Gastrocnemius medialis (tissue), 4 donors: ENCODE measurements at regions of chr4 and their contacts with region 1.

Region 1: DNA sequence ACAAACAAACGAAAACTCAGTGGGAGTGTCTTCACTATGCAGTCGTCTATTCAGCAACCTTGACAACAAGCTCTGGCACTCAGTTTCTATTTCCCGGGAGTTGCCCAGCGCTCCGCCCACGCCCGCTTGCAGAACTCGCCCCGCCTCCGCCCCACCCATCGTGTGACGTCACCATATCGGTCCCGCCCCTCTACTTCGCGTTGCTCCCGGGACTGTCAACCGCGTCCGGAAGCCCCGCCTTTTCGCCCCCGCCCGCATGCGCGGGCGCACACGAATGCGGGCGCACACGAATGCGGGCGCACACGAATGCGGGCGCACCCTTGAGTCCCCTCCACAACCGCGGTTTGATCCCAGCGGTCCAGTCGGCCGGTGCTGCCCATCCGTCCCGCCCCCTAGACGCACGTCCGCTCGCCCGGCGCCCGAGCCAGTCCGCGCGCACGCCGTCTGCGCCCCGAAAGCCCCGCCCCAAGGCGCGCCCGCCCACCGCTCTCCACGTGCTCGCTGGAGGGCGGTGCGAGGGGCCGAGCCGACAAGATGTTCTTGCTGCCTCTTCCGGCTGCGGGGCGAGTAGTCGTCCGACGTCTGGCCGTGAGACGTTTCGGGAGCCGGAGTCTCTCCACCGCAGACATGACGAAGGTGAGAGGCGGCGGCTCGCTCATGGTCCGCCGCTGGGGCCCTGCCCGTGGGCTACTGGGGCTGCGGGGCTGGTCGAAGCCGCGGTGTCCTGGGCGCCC is at the start of gene LAP3:
- DNase-seq: peak; percentile 94 to 97
- ATAC-seq: peak; percentile 90 to 93
- H3K4me3 ChIP-seq: peak within 1 kb of the TSS; percentile 81 to 93 (median 87)
- H3K27ac ChIP-seq: peak within 1 kb of the TSS; percentile 86 to 95 (median 90)
- H3K4me1 ChIP-seq: peaks cover 16 to 28% of the 10 kb centered on the region in 2 donors
- H3K27me3 ChIP-seq: no peaks in the 10 kb centered on the region
- CTCF ChIP-seq: no peak
- POLR2A ChIP-seq: peak; percentile 80 to 90
- total RNA-seq, gene LAP3: 63.7 to 85.2 (median 76.5) TPM

Region 2: DNA sequence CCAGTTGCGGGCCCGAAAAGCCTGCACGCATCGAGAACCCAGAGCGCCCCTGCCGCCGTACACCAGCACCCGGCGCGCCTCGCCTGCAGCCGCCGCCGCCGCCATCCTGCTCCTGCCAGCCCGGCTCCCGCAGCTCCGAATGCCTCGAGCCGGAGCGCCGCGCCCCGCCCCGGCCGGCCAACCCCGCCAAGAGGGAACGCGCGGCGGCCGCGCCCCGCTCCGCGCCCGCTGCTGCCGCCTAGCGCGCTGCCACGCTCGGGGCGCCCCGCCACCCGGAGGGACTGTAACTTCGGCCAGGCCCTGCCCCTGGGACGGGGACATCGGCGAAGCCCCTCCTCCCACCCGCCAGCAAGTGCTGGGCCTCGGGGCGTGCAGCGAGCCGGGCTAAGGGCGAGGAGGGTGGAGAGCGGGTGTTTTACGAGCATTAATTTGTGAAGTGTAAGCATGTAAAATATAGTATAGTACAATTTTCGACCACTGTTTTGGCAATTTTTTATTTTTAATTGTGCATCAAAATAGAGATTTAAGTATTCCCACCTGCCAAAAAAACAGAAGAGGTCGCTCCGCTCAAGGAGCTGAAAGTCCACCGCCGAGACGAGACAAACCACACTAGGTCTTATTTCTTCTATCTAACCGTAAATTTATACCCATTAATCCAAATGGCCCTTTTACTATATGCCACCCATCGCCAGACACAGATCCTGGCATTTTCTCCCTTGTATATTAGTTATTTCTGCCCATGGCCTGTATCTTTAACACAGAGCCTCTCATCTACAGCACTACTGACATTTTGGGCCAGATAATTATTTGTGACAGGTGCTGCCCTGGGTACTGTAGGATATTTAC is 64.9 kb before region 1 on chr4 and contains the start of gene QDPR:
- in situ Hi-C with region 1: no loop called
- intact Hi-C with region 1: loop called (anchors 2 kb)
- DNase-seq: peak; percentile 37 to 75
- ATAC-seq: peak; percentile 80 to 84
- H3K4me3 ChIP-seq: peak within 1 kb of the TSS; percentile 69 to 96 (median 74)
- H3K27ac ChIP-seq: peak within 1 kb of the TSS; percentile 74 to 85 (median 78)
- H3K4me1 ChIP-seq: peaks cover 8 to 23% of the 10 kb centered on the region in 2 donors
- H3K27me3 ChIP-seq: no peaks in the 10 kb centered on the region
- CTCF ChIP-seq: peak in 4 of 5 experiments; percentile 15 to 50 (median 36)
- POLR2A ChIP-seq: peak in 1 of 2 donors; percentile 6
- total RNA-seq, gene QDPR: 6.9 to 15.6 (median 9.1) TPM

Region 3: DNA sequence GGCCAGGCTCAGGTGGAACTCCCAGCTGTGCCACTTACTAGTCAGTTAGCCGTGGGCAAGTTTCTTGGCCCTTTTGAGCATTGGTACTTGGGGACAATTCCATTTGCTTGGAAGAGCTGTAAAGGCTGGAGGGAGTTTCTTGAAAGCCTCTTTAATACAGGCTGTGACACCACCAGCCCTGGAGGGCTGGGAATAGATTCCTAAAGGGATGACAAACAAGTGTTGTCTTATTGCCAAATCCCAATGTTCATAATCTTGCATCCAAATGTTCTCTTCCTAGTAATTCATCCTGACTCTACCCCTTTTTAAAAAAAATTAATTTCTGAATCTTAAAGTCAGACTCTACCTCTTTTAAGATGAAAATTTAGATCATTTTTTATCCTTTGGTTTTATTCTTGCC is 22.7 kb after region 1 on chr4:
- in situ Hi-C with region 1: no loop called
- intact Hi-C with region 1: no loop called
- DNase-seq: no peak
- ATAC-seq: no peak
- H3K4me3 ChIP-seq: no peak overlapping the region
- H3K27ac ChIP-seq: peak overlapping the region in 1 of 4 donors; percentile 7
- H3K4me1 ChIP-seq: peaks cover 0 to 6% of the 10 kb centered on the region in 2 donors
- H3K27me3 ChIP-seq: no peaks in the 10 kb centered on the region
- CTCF ChIP-seq: no peak
- POLR2A ChIP-seq: no peak

Region 4: DNA sequence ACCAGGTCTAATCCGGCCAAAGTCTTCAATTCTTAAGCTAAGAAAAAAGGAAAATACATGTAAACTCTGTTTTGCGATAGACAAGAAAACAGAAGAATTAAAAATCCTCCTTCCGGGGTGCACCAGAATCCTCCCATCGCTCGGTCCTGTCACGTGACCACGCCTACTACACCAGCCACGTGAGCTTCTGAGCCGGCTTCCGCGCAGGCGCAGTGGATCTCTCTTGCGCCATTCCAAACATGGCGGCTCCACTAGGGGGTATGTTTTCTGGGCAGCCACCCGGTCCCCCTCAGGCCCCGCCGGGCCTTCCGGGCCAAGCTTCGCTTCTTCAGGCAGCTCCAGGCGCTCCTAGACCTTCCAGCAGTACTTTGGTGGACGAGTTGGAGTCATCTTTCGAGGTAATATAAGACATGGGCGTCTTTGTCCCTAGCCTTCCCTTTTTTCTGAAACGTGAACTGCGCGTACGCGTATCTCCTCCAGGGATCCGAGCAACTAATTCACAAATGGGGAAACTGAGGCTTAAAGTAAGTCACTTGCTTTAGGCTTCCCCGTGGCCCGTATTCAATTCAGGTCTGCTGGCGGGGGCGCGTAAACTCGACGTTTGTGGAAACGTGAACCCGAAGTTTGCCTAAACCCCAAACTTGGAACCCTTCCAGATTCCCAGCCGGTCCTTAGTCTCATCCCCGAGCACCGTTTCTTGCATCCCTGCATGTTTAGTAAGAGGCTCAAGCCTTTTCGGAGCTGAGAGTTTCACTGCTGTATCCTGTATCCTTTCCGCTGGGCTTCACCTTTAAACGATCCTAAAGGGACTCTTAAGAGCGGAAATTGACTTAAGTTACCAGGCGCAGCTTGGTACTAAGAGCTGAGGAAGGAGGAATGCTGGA is 37.6 kb after region 1 on chr4 and contains the start of gene MED28:
- in situ Hi-C with region 1: no loop called
- intact Hi-C with region 1: loop called (anchors 1 kb)
- DNase-seq: peak; percentile 94 to 95
- ATAC-seq: peak; percentile 88 to 90
- H3K4me3 ChIP-seq: peak within 1 kb of the TSS; percentile 70 to 98 (median 92)
- H3K27ac ChIP-seq: peak within 1 kb of the TSS; percentile 91 to 98 (median 97)
- H3K4me1 ChIP-seq: peaks cover 45% of the 10 kb centered on the region in 2 donors
- H3K27me3 ChIP-seq: no peaks in the 10 kb centered on the region
- CTCF ChIP-seq: peak in 3 of 5 experiments; percentile 23 to 51 (median 24)
- POLR2A ChIP-seq: peak; percentile 96 to 97
- total RNA-seq, gene MED28: 4.5 to 20.0 (median 17.5) TPM

Region 5: GRCh38 chr4:17726925-17727324 is 149.8 kb after region 1 on chr4:
- in situ Hi-C with region 1: no loop called
- intact Hi-C with region 1: no loop called
- DNase-seq: no peak
- ATAC-seq: no peak
- H3K4me3 ChIP-seq: no peak overlapping the region
- H3K27ac ChIP-seq: no peak overlapping the region
- H3K4me1 ChIP-seq: no peaks in the 10 kb centered on the region
- H3K27me3 ChIP-seq: no peaks in the 10 kb centered on the region
- CTCF ChIP-seq: no peak
- POLR2A ChIP-seq: no peak

Region 6: DNA sequence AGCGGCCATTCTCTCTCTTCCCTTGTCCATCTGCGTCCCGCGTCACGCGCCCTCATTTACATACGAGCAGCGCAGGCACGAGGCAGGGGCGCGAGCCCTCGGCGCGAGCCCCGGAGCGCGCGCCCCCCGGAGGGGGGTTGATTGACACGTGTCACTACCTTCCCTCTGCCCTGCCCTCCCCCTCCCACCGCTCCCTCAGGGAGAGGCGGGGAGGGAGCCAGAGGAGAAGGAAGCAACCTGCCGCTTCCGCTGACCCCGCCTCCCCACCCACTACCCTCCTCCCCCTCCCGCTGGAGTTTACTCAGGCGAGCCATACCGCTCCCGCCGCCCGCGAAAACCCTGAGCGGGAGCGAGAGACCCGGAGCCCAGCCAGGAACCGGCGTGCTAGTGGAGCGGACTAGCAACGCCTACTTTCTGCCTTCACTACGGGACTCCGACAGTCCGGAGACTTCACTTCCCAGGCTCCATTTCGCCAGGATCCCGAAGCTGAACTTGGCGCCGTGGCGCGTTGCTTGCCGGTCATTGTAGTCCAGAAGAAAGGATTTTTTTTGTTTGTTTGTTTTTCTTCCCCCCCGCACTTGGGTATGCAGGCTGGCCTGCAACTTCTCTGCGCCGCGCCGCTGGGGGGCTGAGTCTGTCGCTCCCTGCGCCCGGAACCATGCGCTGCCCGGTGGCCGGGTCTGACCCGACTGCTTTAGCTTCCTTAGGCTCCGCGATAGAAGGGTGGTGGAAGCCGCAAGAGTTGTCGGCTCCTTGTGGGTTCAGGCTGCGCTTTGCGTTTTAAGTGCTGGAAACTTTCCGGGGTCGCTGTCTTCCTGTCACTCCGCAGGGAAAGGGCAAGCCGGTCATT is 444.8 kb after region 1 on chr4 and contains the start of gene LCORL:
- in situ Hi-C with region 1: loop called in 2 of 4 experiments (anchors 25 kb)
- intact Hi-C with region 1: loop called (anchors 2 kb)
- DNase-seq: peak; percentile 91 to 95
- ATAC-seq: peak; percentile 92
- H3K4me3 ChIP-seq: peak within 1 kb of the TSS; percentile 70 to 84 (median 78)
- H3K27ac ChIP-seq: peak within 1 kb of the TSS; percentile 88 to 97 (median 96)
- H3K4me1 ChIP-seq: peaks cover 13 to 24% of the 10 kb centered on the region in 2 donors
- H3K27me3 ChIP-seq: no peaks in the 10 kb centered on the region
- CTCF ChIP-seq: peak in 2 of 5 experiments; percentile 33 to 38
- POLR2A ChIP-seq: peak; percentile 97
- total RNA-seq, gene LCORL: 12.8 to 34.7 (median 26.1) TPM